HepG2 (cell line): ENCODE measurements at regions of chr20 and their contacts with region 1.

Region 1: DNA sequence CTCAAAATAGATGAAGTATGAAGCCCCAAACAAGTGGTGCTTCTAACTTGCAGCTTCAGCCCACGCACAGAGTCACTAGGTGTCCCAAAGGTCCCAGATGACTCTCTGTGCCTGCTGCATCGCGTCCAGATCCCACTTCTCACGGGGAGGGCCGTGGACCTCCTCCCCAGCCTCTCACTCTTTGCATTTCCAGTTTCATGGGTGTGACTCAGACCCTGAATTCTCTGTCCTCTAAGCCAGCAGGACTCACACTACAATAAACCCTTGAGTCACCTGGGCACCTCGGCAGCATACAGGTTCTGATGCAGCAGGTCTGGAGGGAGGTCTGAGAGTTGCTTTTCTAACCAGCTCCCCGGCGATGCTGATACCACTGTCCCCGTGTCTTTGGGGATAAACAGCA is 114.0 kb upstream of the RIN2 start:
- DNase-seq: no peak
- ATAC-seq: no peak
- H3K4me3 ChIP-seq: no peak overlapping the region
- H3K27ac ChIP-seq: no peak overlapping the region
- H3K4me1 ChIP-seq: peaks cover 5% of the 10 kb centered on the region
- H3K27me3 ChIP-seq: peaks cover 0 to 5% of the 10 kb centered on the region in 2 experiments; a peak in 3 of 5 replicates
- CTCF ChIP-seq: no peak
- EP300 ChIP-seq: no peak
- POLR2A ChIP-seq: no peak
- RAD21 ChIP-seq: no peak

Region 2: GRCh38 chr20:19683822-19684221 is 39.7 kb after region 1 on chr20:
- CTCF ChIA-PET with region 1: no interaction called
- POLR2A ChIA-PET with region 1: no interaction called
- in situ Hi-C with region 1: no loop called
- intact Hi-C with region 1: loop called (anchors 1 kb)
- DNase-seq: no peak
- ATAC-seq: no peak
- H3K4me3 ChIP-seq: no peak overlapping the region
- H3K27ac ChIP-seq: no peak overlapping the region
- H3K4me1 ChIP-seq: no peaks in the 10 kb centered on the region
- H3K27me3 ChIP-seq: peaks cover 0 to 3% of the 10 kb centered on the region in 2 experiments; a peak in 1 of 5 replicates
- CTCF ChIP-seq: no peak
- EP300 ChIP-seq: no peak
- POLR2A ChIP-seq: no peak
- RAD21 ChIP-seq: no peak

Region 3: GRCh38 chr20:19775360-19776253 is 131.5 kb after region 1 on chr20:
- CTCF ChIA-PET with region 1: no interaction called
- POLR2A ChIA-PET with region 1: no interaction called
- in situ Hi-C with region 1: no loop called
- intact Hi-C with region 1: no loop called
- DNase-seq: no peak
- ATAC-seq: peak; percentile 60
- H3K4me3 ChIP-seq: no peak overlapping the region
- H3K27ac ChIP-seq: no peak overlapping the region
- H3K4me1 ChIP-seq: peaks cover 22% of the 10 kb centered on the region
- H3K27me3 ChIP-seq: no peaks in the 10 kb centered on the region
- CTCF ChIP-seq: no peak
- EP300 ChIP-seq: no peak
- POLR2A ChIP-seq: no peak
- RAD21 ChIP-seq: no peak